HEK293 (cell line): ENCODE measurements at regions of chr22 and their contacts with region 1.

Region 1: GRCh38 chr22:43945632-43946383 is 9.4 kb upstream of the SAMM50 start:
- H3K4me3 ChIP-seq: no peak overlapping the region
- H3K27ac ChIP-seq: no peak overlapping the region
- H3K4me1 ChIP-seq: no peaks in the 10 kb centered on the region
- CTCF ChIP-seq: peak; percentile 89

Region 2: DNA sequence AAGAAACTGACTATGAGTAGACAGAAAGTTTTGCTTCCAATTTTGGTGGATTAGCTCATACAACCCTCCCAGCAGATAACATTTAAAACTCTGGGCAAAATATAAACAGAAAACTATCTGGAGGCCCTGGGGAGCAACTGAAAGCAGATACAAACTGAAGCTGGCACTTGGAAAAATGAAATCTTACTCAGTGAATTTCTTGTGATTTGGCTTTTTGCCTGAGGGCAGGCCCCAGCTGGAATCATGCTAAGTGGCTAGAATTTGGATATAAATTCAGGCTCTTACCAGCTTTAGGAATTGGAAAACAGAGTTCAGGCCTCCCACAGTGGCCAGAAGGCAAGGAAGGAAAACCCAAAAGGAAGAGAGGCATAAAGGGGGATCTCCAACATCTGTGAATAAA is 219.5 kb before region 1 on chr22:
- CTCF ChIA-PET with region 1: no interaction called
- POLR2A ChIA-PET with region 1: no interaction called
- H3K4me3 ChIP-seq: no peak overlapping the region
- H3K27ac ChIP-seq: peak overlapping the region; percentile 28; the same call in 1 of the 2 replicates
- H3K4me1 ChIP-seq: peaks cover 12% of the 10 kb centered on the region; the same call in 1 of the 2 replicates
- CTCF ChIP-seq: no peak

Region 3: GRCh38 chr22:43897751-43898261 is 48.0 kb before region 1 on chr22:
- CTCF ChIA-PET with region 1: interaction called, 13 read pairs
- POLR2A ChIA-PET with region 1: no interaction called
- H3K4me3 ChIP-seq: no peak overlapping the region
- H3K27ac ChIP-seq: no peak overlapping the region
- H3K4me1 ChIP-seq: no peaks in the 10 kb centered on the region
- CTCF ChIP-seq: no peak

Region 4: DNA sequence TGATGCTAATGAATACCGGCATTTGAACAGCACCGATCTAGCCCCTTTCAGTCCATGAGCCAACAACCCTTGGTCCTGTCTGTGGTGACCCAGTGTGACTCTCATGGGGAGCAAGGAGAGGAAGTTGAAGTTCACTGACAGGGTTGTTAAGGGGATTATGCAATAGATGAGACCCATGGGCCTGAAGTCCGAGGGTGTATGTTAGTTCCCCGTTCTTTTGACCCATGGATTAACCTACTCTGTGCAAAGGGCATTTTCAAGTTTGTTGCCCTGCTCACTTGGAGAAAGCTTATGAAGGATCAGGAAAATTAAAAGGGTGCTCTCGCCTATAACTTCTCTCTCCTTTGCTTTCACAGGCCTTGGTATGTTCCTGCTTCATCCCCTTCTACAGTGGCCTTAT is 17.3 kb before region 1 on chr22:
- CTCF ChIA-PET with region 1: interaction called, 60 read pairs
- POLR2A ChIA-PET with region 1: interaction called, 4 read pairs
- H3K4me3 ChIP-seq: no peak overlapping the region
- H3K27ac ChIP-seq: no peak overlapping the region
- H3K4me1 ChIP-seq: no peaks in the 10 kb centered on the region; the same call in 1 of the 2 replicates
- CTCF ChIP-seq: no peak